Activated B cell treated with CpG ODN at 0.5 μM for 24 hours (primary cell): ENCODE measurements at regions of chr2 and their contacts with region 1.

Region 1: GRCh38 chr2:8681786-8682692 is at the start of gene ID2:
- DNase-seq: peak; percentile 81
- ATAC-seq: peak; percentile 87
- H3K4me3 Mint-ChIP-seq: peak within 1 kb of the TSS; percentile 85
- H3K27ac Mint-ChIP-seq: no peak within 1 kb of the TSS
- H3K4me1 Mint-ChIP-seq: peaks cover 54% of the 10 kb centered on the region
- H3K27me3 Mint-ChIP-seq: peaks cover 57% of the 10 kb centered on the region
- CTCF ChIP-seq: no peak
- total RNA-seq, gene ID2: 6.4 and 8.1 TPM in 2 replicates

Region 2: GRCh38 chr2:7037340-7038333 is 1644.4 kb before region 1 on chr2:
- CTCF ChIA-PET with region 1: no interaction called
- POLR2A ChIA-PET with region 1: no interaction called
- intact Hi-C with region 1: loop called (anchors 1 kb)
- DNase-seq: peak; percentile 40
- ATAC-seq: peak; percentile 58
- H3K4me3 Mint-ChIP-seq: no peak overlapping the region
- H3K27ac Mint-ChIP-seq: no peak overlapping the region
- H3K4me1 Mint-ChIP-seq: no peaks in the 10 kb centered on the region
- H3K27me3 Mint-ChIP-seq: no peaks in the 10 kb centered on the region
- CTCF ChIP-seq: peak; percentile 49

Region 3: GRCh38 chr2:7203055-7203467 is 1479.0 kb before region 1 on chr2:
- CTCF ChIA-PET with region 1: interaction called, 4 read pairs
- POLR2A ChIA-PET with region 1: interaction called, 6 read pairs
- intact Hi-C with region 1: loop called (anchors 1 kb)
- DNase-seq: no peak
- ATAC-seq: no peak
- H3K4me3 Mint-ChIP-seq: no peak overlapping the region
- H3K27ac Mint-ChIP-seq: no peak overlapping the region
- H3K4me1 Mint-ChIP-seq: no peaks in the 10 kb centered on the region
- H3K27me3 Mint-ChIP-seq: peaks cover 9% of the 10 kb centered on the region
- CTCF ChIP-seq: no peak

Region 4: GRCh38 chr2:7857904-7858303 is 824.1 kb before region 1 on chr2:
- CTCF ChIA-PET with region 1: no interaction called
- POLR2A ChIA-PET with region 1: no interaction called
- intact Hi-C with region 1: loop called (anchors 10 kb)
- DNase-seq: no peak
- ATAC-seq: no peak
- H3K4me3 Mint-ChIP-seq: no peak overlapping the region
- H3K27ac Mint-ChIP-seq: no peak overlapping the region
- H3K4me1 Mint-ChIP-seq: no peaks in the 10 kb centered on the region
- H3K27me3 Mint-ChIP-seq: peaks cover 7% of the 10 kb centered on the region
- CTCF ChIP-seq: no peak

Region 5: GRCh38 chr2:8303322-8303832 is 378.7 kb before region 1 on chr2:
- CTCF ChIA-PET with region 1: no interaction called
- POLR2A ChIA-PET with region 1: no interaction called
- intact Hi-C with region 1: loop called (anchors 5 kb)
- DNase-seq: peak; percentile 39
- ATAC-seq: peak; percentile 83
- H3K4me3 Mint-ChIP-seq: peak overlapping the region; percentile 38
- H3K27ac Mint-ChIP-seq: peak overlapping the region; percentile 59
- H3K4me1 Mint-ChIP-seq: peaks cover 43% of the 10 kb centered on the region
- H3K27me3 Mint-ChIP-seq: peaks cover 63% of the 10 kb centered on the region
- CTCF ChIP-seq: no peak

Region 6: DNA sequence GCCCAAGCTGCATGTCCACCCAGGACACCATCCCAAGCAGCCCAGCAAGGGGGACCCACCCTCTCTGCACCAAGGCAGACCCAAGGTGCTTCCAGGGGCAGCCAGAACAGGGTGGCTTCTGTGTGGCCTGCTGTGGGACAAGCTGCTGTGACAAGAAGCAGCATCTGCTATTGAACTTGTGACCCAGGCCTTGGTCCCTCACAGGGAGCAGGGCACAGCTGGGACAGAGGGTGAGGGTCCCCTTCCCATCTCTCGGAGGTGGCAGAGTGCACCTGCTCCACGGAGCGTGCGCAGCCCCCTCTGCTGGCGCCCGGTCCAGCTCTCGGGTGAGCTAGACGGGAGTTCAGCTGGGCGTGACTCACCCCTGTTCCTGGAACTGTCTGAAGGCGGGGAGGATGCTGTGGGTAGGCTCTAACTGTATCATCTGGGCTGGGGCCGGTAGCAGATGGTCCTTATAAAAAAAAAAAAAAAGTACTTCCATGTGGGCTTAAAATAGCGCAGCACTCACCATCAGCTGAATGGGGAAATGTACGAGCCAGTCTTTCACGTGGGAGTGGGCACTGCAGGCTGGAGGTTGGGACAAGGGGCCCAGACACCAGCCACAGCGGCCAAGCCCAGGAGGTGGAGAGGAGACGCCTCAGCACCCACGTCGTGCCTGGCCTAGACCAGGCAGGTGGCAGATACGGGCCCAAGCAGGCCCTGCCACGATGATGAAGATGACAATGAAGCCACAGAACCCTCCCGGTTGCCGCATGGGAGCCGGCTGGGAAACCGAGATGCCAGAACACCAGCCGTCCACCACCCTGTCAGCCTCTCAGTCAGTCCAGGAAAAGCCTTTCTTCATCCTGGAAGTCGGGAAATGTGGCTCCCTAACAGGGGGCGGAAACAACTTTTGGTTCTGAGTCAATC is 137.0 kb before region 1 on chr2:
- CTCF ChIA-PET with region 1: no interaction called
- POLR2A ChIA-PET with region 1: interaction called, 13 read pairs
- intact Hi-C with region 1: loop called (anchors 2 kb)
- DNase-seq: peak; percentile 58
- ATAC-seq: peak; percentile 66
- H3K4me3 Mint-ChIP-seq: peak overlapping the region; percentile 38
- H3K27ac Mint-ChIP-seq: peak overlapping the region; percentile 90
- H3K4me1 Mint-ChIP-seq: peaks cover 52% of the 10 kb centered on the region
- H3K27me3 Mint-ChIP-seq: peaks cover 32% of the 10 kb centered on the region
- CTCF ChIP-seq: no peak

Region 7: GRCh38 chr2:8704906-8705305 is 22.9 kb after region 1 on chr2:
- CTCF ChIA-PET with region 1: no interaction called
- POLR2A ChIA-PET with region 1: no interaction called
- intact Hi-C with region 1: no loop called
- DNase-seq: no peak
- ATAC-seq: no peak
- H3K4me3 Mint-ChIP-seq: no peak overlapping the region
- H3K27ac Mint-ChIP-seq: no peak overlapping the region
- H3K4me1 Mint-ChIP-seq: no peaks in the 10 kb centered on the region
- H3K27me3 Mint-ChIP-seq: peaks cover 3% of the 10 kb centered on the region
- CTCF ChIP-seq: no peak

Region 8: DNA sequence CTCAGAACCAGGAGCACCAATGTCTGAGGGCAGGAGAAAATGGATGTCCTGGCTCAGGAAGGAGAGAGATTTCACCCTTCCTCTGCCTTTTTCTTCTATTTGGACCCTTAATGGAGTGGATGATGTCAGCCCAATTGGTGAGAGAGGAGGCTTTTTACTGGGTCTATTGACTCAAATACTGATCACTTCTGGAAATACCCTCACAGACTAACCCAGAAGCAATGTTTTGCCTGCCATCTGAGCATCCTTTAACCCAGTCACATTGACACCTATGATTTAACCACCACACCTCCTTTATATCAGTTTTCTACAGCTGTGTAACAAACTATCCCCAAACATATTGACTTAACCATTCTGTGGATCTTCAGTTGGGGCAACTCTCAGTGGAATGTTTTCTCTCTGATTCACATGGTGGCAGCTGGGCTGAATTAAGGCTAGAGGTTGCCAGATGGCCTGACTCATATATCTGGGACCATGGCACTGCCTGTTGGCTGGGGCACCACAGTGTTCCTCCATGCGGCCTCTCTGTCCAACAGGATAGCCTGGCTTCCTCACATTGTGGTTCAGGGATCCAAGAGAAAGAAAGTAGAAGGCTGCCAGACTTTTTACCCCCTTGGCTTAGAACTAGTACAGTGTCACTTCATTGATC is 339.6 kb after region 1 on chr2:
- CTCF ChIA-PET with region 1: no interaction called
- POLR2A ChIA-PET with region 1: no interaction called
- intact Hi-C with region 1: no loop called
- DNase-seq: no peak
- ATAC-seq: no peak
- H3K4me3 Mint-ChIP-seq: no peak overlapping the region
- H3K27ac Mint-ChIP-seq: no peak overlapping the region
- H3K4me1 Mint-ChIP-seq: no peaks in the 10 kb centered on the region
- H3K27me3 Mint-ChIP-seq: peaks cover 10% of the 10 kb centered on the region
- CTCF ChIP-seq: no peak